AG04450 (cell line): ENCODE measurements at regions of chr7 and their contacts with region 1.

Region 1: DNA sequence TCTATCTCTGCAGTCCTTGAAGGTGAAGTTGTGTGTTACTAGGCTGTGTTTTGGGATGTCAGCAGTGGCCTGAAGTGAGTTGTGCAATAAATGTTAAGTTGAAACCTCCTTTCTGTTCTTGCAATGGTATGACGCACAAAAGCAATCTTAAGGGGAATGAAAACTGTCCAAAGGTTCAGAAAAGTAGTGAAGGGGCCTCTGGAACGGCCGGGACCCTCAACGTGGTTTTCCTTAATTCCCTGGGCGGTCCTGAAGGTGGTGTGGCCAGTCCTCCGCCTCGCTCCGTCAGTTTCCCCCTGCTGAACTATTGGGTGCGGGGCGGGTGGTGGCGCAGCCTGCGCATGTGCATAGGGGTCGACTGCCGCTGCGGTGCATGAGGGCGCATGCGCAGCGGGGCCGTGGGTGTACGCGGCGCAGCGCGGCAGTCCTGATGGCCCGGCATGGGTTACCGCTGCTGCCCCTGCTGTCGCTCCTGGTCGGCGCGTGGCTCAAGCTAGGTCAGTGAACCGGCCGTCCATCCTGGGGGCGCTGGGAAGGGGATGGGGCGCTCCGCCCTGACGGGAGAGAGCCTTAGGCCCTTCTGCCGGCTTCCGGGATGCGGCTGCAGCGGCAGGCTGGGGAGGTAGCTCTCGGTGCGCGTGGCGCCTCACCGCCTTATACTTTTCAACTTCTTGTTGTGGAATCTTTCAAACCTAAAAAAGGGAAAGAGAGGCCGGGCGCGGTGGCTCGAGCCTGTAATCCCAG is at the start of gene SUMF2:
- DNase-seq: peak; percentile 58
- H3K4me3 ChIP-seq: peak within 1 kb of the TSS; percentile 94
- H3K27ac ChIP-seq: peak within 1 kb of the TSS; percentile 82
- H3K27me3 ChIP-seq: no peaks in the 10 kb centered on the region
- CTCF ChIP-seq: peak; percentile 18
- polyA plus RNA-seq, gene SUMF2: 95.4 and 102 TPM in 2 replicates

Region 2: GRCh38 chr7:55348499-55348898 is 715.6 kb before region 1 on chr7:
- CTCF ChIA-PET with region 1: no interaction called
- POLR2A ChIA-PET with region 1: no interaction called
- DNase-seq: no peak
- H3K4me3 ChIP-seq: no peak overlapping the region
- H3K27ac ChIP-seq: no peak overlapping the region
- H3K27me3 ChIP-seq: peaks cover 17% of the 10 kb centered on the region
- CTCF ChIP-seq: no peak

Region 3: GRCh38 chr7:55996856-55997500 is 67.1 kb before region 1 on chr7:
- CTCF ChIA-PET with region 1: interaction called, 10 read pairs
- POLR2A ChIA-PET with region 1: no interaction called
- DNase-seq: no peak
- H3K4me3 ChIP-seq: no peak overlapping the region
- H3K27ac ChIP-seq: no peak overlapping the region
- H3K27me3 ChIP-seq: no peaks in the 10 kb centered on the region
- CTCF ChIP-seq: no peak

Region 4: GRCh38 chr7:56003749-56004148 is 60.3 kb before region 1 on chr7:
- CTCF ChIA-PET with region 1: interaction called, 12 read pairs
- POLR2A ChIA-PET with region 1: interaction called, 16 read pairs
- DNase-seq: no peak
- H3K4me3 ChIP-seq: no peak overlapping the region
- H3K27ac ChIP-seq: no peak overlapping the region
- H3K27me3 ChIP-seq: no peaks in the 10 kb centered on the region
- CTCF ChIP-seq: no peak

Region 5: DNA sequence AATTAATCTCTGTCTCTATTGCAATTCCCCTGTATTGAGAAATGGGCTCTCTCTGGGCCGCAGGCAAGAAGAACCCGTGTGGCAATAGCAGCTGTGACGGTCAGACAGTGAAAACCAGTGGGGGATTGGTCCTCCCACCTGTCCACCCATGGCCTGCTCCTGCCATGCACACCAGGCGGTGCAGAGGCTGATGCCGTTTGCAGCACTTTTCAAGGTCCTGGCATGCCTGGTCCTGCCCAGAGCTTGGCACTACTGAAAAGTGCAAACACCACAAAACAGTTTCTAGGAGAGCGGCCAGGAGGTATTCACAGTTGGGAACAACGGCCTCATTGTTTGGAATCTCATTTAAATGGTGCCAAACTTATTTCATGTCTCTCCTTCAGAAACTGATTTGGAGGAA is 54.4 kb before region 1 on chr7:
- CTCF ChIA-PET with region 1: interaction called, 12 read pairs
- POLR2A ChIA-PET with region 1: interaction called, 16 read pairs
- DNase-seq: no peak
- H3K4me3 ChIP-seq: no peak overlapping the region
- H3K27ac ChIP-seq: no peak overlapping the region
- H3K27me3 ChIP-seq: no peaks in the 10 kb centered on the region
- CTCF ChIP-seq: no peak

Region 6: GRCh38 chr7:56033671-56034432 is 30.2 kb before region 1 on chr7:
- CTCF ChIA-PET with region 1: interaction called, 4 read pairs
- POLR2A ChIA-PET with region 1: interaction called, 40 read pairs
- DNase-seq: no peak
- H3K4me3 ChIP-seq: peak overlapping the region; percentile 73
- H3K27ac ChIP-seq: peak overlapping the region; percentile 66
- H3K27me3 ChIP-seq: no peaks in the 10 kb centered on the region
- CTCF ChIP-seq: peak; percentile 42

Region 7: DNA sequence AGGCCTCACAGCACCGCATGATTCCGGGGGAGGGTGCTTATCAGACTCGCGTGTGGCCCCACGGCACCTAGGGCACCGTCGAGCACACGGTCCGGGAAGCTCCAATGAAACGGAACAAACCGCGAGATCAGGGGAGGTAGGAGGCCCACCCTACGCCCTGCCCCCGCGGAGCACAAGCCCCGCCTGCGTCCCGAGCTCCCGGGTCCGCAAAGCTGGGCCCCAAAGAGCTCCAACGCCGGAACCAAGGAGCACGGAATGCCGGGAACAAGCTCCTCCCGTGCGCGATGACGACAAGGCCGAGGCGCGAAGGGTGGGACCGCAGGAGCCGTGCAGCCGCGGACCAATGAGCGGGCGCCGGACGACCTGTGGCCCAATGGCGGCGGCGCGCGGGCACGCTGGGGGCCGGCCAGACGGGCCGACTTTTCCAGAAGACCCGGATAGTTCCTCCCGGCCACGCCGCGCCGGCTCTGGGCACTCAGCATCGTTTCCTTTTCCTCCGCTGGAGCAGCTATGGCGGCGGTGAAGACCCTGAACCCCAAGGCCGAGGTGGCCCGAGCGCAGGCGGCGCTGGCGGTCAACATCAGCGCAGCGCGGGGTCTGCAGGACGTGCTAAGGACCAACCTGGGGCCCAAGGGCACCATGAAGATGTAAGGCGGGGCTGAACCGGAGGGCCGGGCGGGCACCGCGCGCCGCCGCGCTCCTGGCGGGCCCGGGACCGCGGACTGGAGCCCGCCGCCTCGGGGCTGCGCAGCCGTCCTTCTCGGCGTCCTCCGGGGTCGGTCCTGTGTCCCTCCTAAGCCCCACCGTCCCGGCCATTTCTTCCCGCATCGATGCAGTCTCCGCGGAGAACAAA is 12.5 kb before region 1 on chr7 and contains the starts of genes CCT6A and PSPH:
- CTCF ChIA-PET with region 1: interaction called, 14 read pairs
- POLR2A ChIA-PET with region 1: interaction called, 41 read pairs
- DNase-seq: peak; percentile 97
- H3K4me3 ChIP-seq: peak within 1 kb of the TSS; percentile 93
- H3K27ac ChIP-seq: peak within 1 kb of the TSS; percentile 87
- H3K27me3 ChIP-seq: no peaks in the 10 kb centered on the region
- CTCF ChIP-seq: no peak
- polyA plus RNA-seq, gene CCT6A: 214 and 302 TPM in 2 replicates
- polyA plus RNA-seq, gene PSPH: 66.0 and 66.4 TPM in 2 replicates

Region 8: GRCh38 chr7:56079450-56080185 is 15.6 kb after region 1 on chr7:
- CTCF ChIA-PET with region 1: interaction called, 55 read pairs
- POLR2A ChIA-PET with region 1: no interaction called
- DNase-seq: no peak
- H3K4me3 ChIP-seq: no peak overlapping the region
- H3K27ac ChIP-seq: peak overlapping the region; percentile 31
- H3K27me3 ChIP-seq: no peaks in the 10 kb centered on the region
- CTCF ChIP-seq: peak; percentile 89

Region 9: DNA sequence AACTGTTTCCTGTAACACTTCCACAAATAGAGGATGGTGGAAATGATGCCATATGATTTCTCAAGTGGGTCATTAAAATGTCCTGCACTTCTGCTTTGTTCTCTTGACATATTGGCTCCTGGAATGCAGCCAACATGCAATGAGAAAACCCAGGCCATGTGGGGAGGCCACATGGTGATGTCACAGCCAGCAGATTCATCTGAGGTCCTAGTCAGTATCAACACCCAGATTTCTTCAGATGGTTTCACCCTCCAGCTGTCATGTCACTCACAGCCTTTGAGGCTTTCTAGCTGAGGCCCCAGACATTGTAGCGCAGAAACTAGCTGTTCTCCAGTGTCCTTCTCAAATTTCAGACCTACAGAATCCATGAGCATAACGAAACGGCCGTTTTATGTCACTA is 154.5 kb after region 1 on chr7:
- CTCF ChIA-PET with region 1: no interaction called
- POLR2A ChIA-PET with region 1: no interaction called
- DNase-seq: no peak
- H3K4me3 ChIP-seq: no peak overlapping the region
- H3K27ac ChIP-seq: no peak overlapping the region
- H3K27me3 ChIP-seq: no peaks in the 10 kb centered on the region
- CTCF ChIP-seq: no peak

Region 10: DNA sequence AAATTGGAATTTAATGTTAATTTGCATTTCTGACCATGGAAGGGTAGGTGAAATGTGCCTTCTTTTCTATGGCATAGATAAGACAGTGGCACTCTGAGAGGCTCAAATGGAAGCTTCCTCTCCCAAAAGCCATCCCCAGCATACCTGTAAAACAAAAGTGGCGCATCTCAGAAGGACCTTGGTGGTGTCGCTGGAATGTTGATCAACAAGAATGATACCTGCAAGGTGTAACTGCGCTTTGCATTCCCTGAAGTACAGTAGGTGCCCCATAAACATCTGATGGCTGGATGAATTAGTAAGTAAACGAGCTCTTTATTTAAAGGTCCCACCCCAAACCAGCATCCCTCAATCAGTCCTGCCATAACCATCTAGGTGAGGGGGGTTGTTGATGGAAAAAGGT is 174.4 kb after region 1 on chr7:
- CTCF ChIA-PET with region 1: no interaction called
- POLR2A ChIA-PET with region 1: no interaction called
- DNase-seq: no peak
- H3K4me3 ChIP-seq: no peak overlapping the region
- H3K27ac ChIP-seq: no peak overlapping the region
- H3K27me3 ChIP-seq: no peaks in the 10 kb centered on the region
- CTCF ChIP-seq: no peak